Posterior vena cava (tissue), 2 donors: ENCODE measurements at regions of chr5 and their contacts with region 1.

Region 1: DNA sequence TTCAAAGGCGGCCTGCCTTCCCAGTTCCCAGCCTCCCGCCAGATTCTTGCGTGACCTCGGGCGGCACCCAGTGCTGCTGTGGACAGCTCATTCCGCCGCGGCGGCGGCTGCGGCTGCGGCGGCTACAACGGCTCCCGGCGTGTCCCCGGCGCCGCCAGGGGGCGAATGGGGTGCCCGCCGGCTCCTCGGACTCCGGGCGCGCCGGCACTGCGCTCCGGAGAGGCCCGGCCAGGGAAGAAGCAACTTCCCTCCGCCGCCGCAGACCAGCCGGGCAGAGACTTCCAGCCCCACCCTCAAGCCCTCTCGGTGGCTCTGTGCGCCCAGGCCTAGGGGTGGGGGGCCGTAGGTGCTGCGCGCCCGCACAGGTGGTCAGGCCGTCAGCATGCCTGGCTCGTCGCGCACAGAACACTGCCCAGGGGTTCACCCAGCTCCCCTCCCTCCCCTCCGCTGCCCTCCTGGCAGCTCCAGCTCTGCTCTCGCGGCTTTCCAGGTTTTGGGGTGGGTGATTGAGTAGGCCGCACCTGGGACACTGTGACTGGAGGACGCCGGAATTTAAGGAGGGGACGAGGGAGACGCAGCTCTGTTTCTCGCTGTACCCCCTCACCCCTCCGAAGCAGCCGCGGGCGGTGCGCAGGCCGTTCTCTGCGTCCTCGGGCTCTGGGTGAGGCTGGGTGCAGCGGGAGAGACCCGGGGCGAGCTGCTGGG is 20.2 kb downstream of the IGIP start:
- DNase-seq: peak; percentile 91

Region 2: GRCh38 chr5:140073296-140073695 is 72.7 kb before region 1 on chr5:
- intact Hi-C with region 1: loop called in 1 of 2 experiments (anchors 5 kb)
- DNase-seq: no peak

Region 3: DNA sequence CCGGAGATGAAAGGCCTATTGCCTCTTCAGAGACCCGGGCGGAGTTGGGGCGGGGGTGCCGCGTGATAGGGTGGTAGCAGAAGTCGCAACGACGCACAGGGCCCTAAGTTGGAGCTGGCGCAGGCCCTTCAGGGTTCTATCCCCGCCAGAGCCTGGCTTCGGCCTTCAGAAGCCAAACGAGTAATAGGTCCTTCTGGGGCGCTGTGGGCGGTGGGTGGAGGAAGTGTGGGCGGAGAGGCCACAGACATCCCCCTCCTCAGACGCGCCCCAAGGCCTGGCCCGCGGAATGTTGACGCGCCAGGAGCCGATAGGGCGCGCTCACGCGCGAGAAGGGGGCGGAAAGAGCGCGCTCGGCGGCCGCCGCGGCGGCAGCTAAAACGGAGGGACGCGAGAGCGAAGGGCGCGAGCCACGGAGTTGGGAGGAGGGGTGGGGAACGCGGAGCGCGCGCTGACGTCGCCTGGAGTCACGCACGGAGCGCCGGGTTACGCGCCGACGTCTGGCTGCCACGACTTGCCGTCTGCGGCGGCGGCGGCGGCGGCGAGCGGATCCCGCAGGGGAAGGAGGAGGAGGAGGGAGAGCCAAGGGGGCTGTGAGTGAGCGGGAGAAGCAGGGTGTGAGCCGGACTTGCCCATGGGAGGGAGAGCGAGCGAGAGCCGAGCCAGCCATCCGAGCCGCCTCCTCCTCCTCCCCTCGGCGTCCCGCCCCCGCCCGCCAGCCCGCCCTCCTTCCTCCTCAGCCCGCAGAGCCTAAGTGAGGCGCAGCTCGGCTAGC is 38.5 kb before region 1 on chr5:
- intact Hi-C with region 1: loop called in 1 of 2 experiments (anchors 5 kb)
- DNase-seq: peak; percentile 98

Region 4: DNA sequence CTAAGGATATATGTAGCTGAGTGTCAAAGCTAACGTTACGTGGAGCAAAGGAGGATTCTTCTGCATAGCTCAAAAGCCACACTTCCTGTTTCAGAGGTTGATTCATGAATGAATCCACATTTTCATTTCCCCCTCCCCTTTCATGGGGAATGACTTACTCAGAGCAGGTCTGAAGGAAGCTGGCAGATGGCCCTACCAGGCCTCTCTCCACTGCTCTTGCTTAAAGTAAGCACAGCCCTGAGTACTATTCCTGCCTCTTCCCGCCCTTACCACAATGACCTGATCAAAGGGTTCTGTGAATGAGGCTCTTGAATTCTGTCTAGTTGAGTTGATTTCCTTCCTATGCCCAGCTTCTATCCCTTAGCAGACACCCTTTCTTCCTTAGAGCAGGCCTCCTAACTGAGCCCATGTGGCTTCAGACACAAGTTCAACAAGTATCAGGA is 14.0 kb before region 1 on chr5:
- intact Hi-C with region 1: no loop called
- DNase-seq: no peak

Region 5: DNA sequence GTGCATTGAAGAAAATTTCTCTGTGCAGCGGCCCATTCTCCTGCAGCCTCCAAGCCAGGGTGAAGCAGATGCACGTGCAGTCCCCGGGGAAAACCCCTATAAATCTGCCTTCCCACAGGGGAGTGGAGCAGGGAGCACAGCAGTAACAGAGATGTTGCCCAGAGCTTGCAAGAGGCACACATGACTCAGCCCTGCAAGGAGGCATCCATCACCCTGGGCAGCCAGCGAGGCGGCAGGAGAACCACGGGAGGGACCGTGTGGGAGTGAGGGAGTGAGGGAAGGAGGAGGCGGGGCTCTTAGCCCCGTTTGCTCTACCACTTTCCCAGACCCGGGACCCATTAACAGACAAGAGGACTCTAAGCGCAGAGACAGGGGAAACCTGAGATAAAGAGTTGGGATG is 1632.2 kb after region 1 on chr5:
- intact Hi-C with region 1: loop called in 1 of 2 experiments (anchors 5 kb)
- DNase-seq: no peak